Activated T-helper 1 cell treated with anti-CD3 and anti-CD28 coated beads, Interleukin-12 subunit alpha, Interleukin-12 subunit beta, Interleukin-2, Interleukin-4 antibody, amounts not matched to agents 30 ng/mL and 10 ng/mL and 1 ng/mL, durations not matched to agents 14 hours and 24 hours and 36 hours (primary cell): ENCODE measurements at regions of chrX and their contacts with region 1.

Region 1: GRCh38 chrX:107776649-107777535 is 641 bp upstream of the NCBP2L start:
- DNase-seq: peak; percentile 62
- H3K4me3 Mint-ChIP-seq: peak overlapping the region; percentile 87
- H3K27ac Mint-ChIP-seq: peak overlapping the region; percentile 71
- H3K4me1 Mint-ChIP-seq: peaks cover 13% of the 10 kb centered on the region
- H3K27me3 Mint-ChIP-seq: peaks cover 12% of the 10 kb centered on the region

Region 2: GRCh38 chrX:106894392-106894909 is 882.4 kb before region 1 on chrX:
- intact Hi-C with region 1: loop called (anchors 2 kb)
- DNase-seq: peak; percentile 18
- H3K4me3 Mint-ChIP-seq: no peak overlapping the region
- H3K27ac Mint-ChIP-seq: no peak overlapping the region
- H3K4me1 Mint-ChIP-seq: no peaks in the 10 kb centered on the region
- H3K27me3 Mint-ChIP-seq: no peaks in the 10 kb centered on the region

Region 3: GRCh38 chrX:107025545-107025944 is 751.3 kb before region 1 on chrX:
- intact Hi-C with region 1: loop called (anchors 1 kb)
- DNase-seq: no peak
- H3K4me3 Mint-ChIP-seq: no peak overlapping the region
- H3K27ac Mint-ChIP-seq: no peak overlapping the region
- H3K4me1 Mint-ChIP-seq: no peaks in the 10 kb centered on the region
- H3K27me3 Mint-ChIP-seq: no peaks in the 10 kb centered on the region

Region 4: GRCh38 chrX:107627838-107628661 is 148.8 kb before region 1 on chrX and contains the start of gene PRPS1:
- intact Hi-C with region 1: loop called (anchors 1 kb)
- DNase-seq: peak; percentile 86
- H3K4me3 Mint-ChIP-seq: peak within 1 kb of the TSS; percentile 96
- H3K27ac Mint-ChIP-seq: peak within 1 kb of the TSS; percentile 93
- H3K4me1 Mint-ChIP-seq: peaks cover 30% of the 10 kb centered on the region
- H3K27me3 Mint-ChIP-seq: no peaks in the 10 kb centered on the region
- total RNA-seq, gene PRPS1: 97.9 and 101 TPM in 2 replicates

Region 5: DNA sequence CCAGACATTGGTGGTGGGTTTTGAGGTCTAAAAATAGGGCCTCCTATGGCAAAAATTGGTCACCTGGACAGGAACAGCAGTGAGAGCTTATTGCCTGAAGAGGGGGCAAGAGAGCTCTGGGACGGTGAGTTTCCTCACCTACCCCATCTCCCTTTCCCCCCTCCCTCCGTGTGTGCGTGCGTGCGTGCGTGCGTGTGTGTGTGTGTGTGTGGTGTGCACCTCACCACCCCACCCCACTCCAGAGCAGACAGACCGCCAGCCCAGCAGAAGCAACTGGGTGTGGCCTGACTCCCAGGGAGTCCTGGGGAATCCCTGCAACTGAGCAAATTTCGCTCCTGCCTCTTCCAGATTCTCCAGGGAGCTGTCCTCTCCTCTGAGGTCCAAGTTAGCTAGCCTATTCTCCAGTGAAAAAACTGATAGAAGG is 103.9 kb before region 1 on chrX:
- intact Hi-C with region 1: loop called (anchors 1 kb)
- DNase-seq: peak; percentile 70
- H3K4me3 Mint-ChIP-seq: peak overlapping the region; percentile 53
- H3K27ac Mint-ChIP-seq: peak overlapping the region; percentile 99
- H3K4me1 Mint-ChIP-seq: peaks cover 46% of the 10 kb centered on the region
- H3K27me3 Mint-ChIP-seq: no peaks in the 10 kb centered on the region

Region 6: DNA sequence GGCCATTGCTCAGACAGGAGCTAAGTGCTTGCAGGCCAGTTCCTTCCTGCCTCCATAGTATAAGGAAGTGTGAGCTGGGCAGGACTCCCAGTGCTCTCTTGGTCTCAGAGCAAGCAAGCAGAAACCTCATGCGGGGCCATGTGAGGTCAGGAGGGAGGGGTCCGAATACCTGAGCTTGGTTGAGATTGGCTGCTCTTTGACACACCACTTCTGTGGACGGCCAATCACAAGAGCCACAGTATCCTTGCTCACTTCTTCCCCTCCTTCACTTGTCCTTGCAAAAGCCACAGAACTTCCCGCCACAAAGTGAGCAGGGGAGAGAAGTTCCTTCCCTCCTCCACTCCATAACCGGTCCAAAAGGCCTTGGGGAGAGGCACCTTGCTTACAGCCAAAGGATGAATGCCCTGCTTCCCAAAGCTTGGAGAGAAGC is 91.9 kb before region 1 on chrX:
- intact Hi-C with region 1: no loop called
- DNase-seq: peak; percentile 3
- H3K4me3 Mint-ChIP-seq: no peak overlapping the region
- H3K27ac Mint-ChIP-seq: no peak overlapping the region
- H3K4me1 Mint-ChIP-seq: peaks cover 34% of the 10 kb centered on the region
- H3K27me3 Mint-ChIP-seq: peaks cover 5% of the 10 kb centered on the region

Region 7: DNA sequence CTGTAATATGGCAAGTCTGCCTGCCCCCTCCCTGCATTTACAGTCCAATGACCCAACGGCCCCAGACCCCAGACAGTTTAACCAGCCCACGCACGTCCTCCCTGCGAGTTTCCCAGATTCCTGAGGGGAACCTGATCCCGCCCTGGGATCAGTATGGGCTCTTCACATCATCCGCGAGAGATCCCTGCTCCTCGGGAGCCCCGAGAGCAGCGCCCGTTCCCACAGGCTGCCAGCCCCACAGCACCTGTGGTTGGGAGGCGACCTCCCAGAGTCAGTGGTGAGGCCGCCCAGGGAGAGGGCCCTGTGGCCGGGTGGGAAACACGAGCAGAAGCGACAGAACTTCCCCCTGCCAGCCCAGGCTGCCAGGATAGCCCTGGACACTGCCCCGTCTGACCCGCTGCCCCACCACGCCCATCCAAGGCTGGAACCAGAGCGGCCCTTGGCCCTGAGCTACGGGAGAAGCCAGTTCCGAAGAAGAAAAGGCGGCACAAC is 34.1 kb before region 1 on chrX:
- intact Hi-C with region 1: loop called (anchors 1 kb)
- DNase-seq: no peak
- H3K4me3 Mint-ChIP-seq: peak overlapping the region; percentile 66
- H3K27ac Mint-ChIP-seq: peak overlapping the region; percentile 97
- H3K4me1 Mint-ChIP-seq: peaks cover 14% of the 10 kb centered on the region
- H3K27me3 Mint-ChIP-seq: peaks cover 2% of the 10 kb centered on the region

Region 8: DNA sequence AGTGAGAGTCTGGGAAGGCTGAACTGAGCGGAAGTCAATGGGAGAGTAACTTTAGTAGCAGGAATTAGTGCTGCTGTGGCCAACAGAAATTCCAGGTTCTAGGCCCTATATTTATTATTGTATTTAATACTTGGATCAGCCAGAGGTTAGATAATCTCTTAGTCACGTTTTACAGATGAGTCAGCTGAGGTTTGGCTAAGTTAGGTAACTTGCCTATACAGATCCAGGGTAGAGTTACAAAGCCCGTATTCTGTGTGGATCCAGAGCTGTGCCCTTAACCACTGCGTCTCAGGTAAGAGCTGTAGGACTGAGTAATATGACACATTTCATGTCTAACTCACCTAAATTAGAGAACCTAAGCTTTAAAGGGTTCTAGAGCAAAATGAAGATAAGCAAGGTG is 294.0 kb after region 1 on chrX:
- intact Hi-C with region 1: loop called (anchors 2 kb)
- DNase-seq: no peak
- H3K4me3 Mint-ChIP-seq: no peak overlapping the region
- H3K27ac Mint-ChIP-seq: no peak overlapping the region
- H3K4me1 Mint-ChIP-seq: no peaks in the 10 kb centered on the region
- H3K27me3 Mint-ChIP-seq: peaks cover 6% of the 10 kb centered on the region